Activated T-helper 2 cell treated with anti-CD3 and anti-CD28 coated beads, Interferon-gamma antibody, Interleukin-2, Interleukin-4, amounts not matched to agents 10 μg/mL and 5 μg/mL and 100 μg/mL, durations not matched to agents 14 hours and 24 hours and 36 hours (primary cell): ENCODE measurements at regions of chr3 and their contacts with region 1.

Region 1: DNA sequence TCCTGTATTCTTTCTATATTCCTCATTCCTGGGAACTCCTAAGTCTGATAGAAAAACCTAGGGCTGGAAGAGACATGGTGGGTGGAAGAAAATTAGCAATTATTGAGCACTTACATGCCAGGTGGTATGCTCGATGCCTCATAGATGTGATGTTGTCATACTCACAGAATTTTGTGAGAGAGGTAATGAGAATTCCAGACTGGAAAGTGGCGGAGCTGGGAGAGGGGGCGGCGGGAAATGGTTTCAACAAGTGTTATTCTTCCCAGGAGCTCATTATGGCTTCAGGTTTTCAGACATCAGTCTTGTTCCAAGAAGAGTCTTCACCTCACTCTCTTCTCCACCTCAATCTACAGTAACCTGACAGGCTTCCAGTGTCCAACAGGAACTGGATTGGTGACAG is 16.2 kb downstream of the TIMP4 start:
- DNase-seq: no peak
- H3K4me3 Mint-ChIP-seq: no peak overlapping the region
- H3K27ac Mint-ChIP-seq: no peak overlapping the region
- H3K4me1 Mint-ChIP-seq: peaks cover 3% of the 10 kb centered on the region
- H3K27me3 Mint-ChIP-seq: no peaks in the 10 kb centered on the region

Region 2: DNA sequence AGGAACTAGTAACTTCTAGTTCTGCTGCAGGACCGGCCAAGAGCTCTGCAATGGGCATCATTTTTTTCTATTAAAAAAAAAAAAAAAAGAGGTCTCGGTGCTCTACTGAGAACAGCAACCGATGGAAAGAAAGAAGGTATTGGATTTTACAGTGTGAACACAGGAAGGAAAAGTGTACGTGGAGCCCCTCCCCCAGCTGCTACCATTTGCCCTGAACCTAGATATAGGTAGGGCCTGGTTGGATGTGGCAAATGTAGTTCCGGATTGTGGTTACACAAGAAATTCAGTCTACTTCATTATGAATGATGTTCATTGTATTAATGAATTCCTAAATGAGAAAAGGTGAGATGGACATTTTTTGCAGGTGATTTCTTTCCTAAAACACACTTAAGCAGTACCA is 128.5 kb after region 1 on chr3:
- intact Hi-C with region 1: loop called (anchors 1 kb)
- DNase-seq: no peak
- H3K4me3 Mint-ChIP-seq: no peak overlapping the region
- H3K27ac Mint-ChIP-seq: no peak overlapping the region
- H3K4me1 Mint-ChIP-seq: no peaks in the 10 kb centered on the region
- H3K27me3 Mint-ChIP-seq: peaks cover 28% of the 10 kb centered on the region

Region 3: DNA sequence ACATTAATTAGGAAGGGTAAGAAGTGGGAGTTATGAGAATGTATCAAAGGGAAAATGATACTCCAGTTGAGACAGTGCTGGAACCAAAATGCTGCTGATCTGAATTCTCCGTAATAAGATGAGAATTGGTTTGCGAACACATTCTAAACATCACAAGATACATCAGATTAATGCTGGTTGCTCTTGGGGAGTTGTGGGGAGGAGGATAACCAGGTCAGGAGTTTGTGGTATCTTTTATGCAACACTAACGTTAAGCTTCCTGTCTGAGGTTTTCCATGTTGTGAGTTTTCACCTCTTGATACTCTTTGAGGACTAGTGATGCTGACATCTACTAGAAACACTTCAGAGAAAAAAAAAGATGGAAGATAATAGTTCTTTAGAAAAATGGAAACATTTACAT is 193.6 kb after region 1 on chr3:
- intact Hi-C with region 1: no loop called
- DNase-seq: peak; percentile 11
- H3K4me3 Mint-ChIP-seq: peak overlapping the region; percentile 20
- H3K27ac Mint-ChIP-seq: peak overlapping the region; percentile 57
- H3K4me1 Mint-ChIP-seq: peaks cover 27% of the 10 kb centered on the region
- H3K27me3 Mint-ChIP-seq: peaks cover 1% of the 10 kb centered on the region

Region 4: GRCh38 chr3:12695112-12695511 is 552.6 kb after region 1 on chr3:
- intact Hi-C with region 1: no loop called
- DNase-seq: no peak
- H3K4me3 Mint-ChIP-seq: no peak overlapping the region
- H3K27ac Mint-ChIP-seq: no peak overlapping the region
- H3K4me1 Mint-ChIP-seq: no peaks in the 10 kb centered on the region
- H3K27me3 Mint-ChIP-seq: no peaks in the 10 kb centered on the region